Endothelial cell of umbilical vein (primary cell): ENCODE measurements at regions of chr12 and their contacts with region 1.

Region 1: DNA sequence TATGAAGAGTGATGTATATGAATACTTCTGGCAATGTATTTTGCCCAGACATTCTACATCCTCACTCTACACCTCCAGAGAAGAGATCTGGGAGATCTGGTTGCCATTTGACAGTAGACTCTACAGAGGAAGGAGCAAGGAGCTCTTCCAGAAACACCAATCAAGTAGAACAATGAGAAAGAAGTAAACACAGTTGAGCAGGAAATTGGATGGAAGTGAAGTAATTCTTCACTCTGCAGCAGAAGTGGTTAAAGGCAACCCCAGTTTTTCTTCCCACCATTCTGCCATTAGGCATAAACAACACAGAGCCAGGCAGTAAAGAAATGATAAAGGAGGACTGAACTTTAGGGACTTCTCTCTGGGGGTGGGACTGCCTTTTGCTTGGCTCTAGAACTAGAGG is 48.5 kb upstream of the PRICKLE1 start:
- DNase-seq: peak; percentile 89
- H3K4me3 ChIP-seq: peak overlapping the region in 1 of 3 experiments; percentile 38
- H3K27ac ChIP-seq: peak overlapping the region; percentile 64
- H3K4me1 ChIP-seq: peaks cover 6% of the 10 kb centered on the region
- H3K27me3 ChIP-seq: no peaks in the 10 kb centered on the region
- CTCF ChIP-seq: no peak
- POLR2A ChIP-seq: no peak

Region 2: GRCh38 chr12:42669471-42669992 is 31.5 kb after region 1 on chr12:
- CTCF ChIA-PET with region 1: no interaction called
- POLR2A ChIA-PET with region 1: no interaction called
- dilution Hi-C with region 1: no loop called
- intact Hi-C with region 1: loop called (anchors 1 kb)
- DNase-seq: peak; percentile 44
- H3K4me3 ChIP-seq: no peak overlapping the region
- H3K27ac ChIP-seq: no peak overlapping the region
- H3K4me1 ChIP-seq: no peaks in the 10 kb centered on the region
- H3K27me3 ChIP-seq: no peaks in the 10 kb centered on the region
- CTCF ChIP-seq: no peak
- POLR2A ChIP-seq: no peak